ENCODE measurements at regions of chr7 and their contacts with region 1.

Region 1: GRCh38 chr7:54839538-54840213 is 80.7 kb upstream of the SEC61G start:
- DNase-seq: peak; percentile 80 to 82
- ATAC-seq: peak; percentile 90 to 98 (median 92)
- H3K4me3 ChIP-seq: no peak overlapping the region
- H3K27ac ChIP-seq: peak overlapping the region in 1 of 10 donors; percentile 86
- H3K4me1 ChIP-seq: peaks cover 3 to 51% (median 21%) of the 10 kb centered on the region in 9 donors
- H3K27me3 ChIP-seq: no peaks in the 10 kb centered on the region
- CTCF ChIP-seq: peak; percentile 44 to 80 (median 72)

Region 2: GRCh38 chr7:54773472-54774399 is 65.9 kb before region 1 on chr7:
- intact Hi-C with region 1: loop called in 4 of 10 experiments (anchors 2 to 5 kb)
- DNase-seq: peak; percentile 79 to 80
- ATAC-seq: peak; percentile 68 to 96 (median 92)
- H3K4me3 ChIP-seq: peak overlapping the region in 9 of 10 donors; percentile 5 to 52 (median 41)
- H3K27ac ChIP-seq: no peak overlapping the region
- H3K4me1 ChIP-seq: peaks cover 0 to 8% (median 0%) of the 10 kb centered on the region in 9 donors
- H3K27me3 ChIP-seq: peaks cover 0 to 38% (median 21%) of the 10 kb centered on the region in 7 donors
- CTCF ChIP-seq: peak; percentile 73 to 91 (median 83)

Region 3: GRCh38 chr7:54788664-54789063 is 51.0 kb before region 1 on chr7:
- intact Hi-C with region 1: loop called in 8 of 10 experiments (anchors 1 to 10 kb)
- DNase-seq: peak in 1 of 2 donors; percentile 36
- ATAC-seq: peak; percentile 67 to 93 (median 78)
- H3K4me3 ChIP-seq: no peak overlapping the region
- H3K27ac ChIP-seq: no peak overlapping the region
- H3K4me1 ChIP-seq: peaks cover 0 to 9% (median 6%) of the 10 kb centered on the region in 9 donors
- H3K27me3 ChIP-seq: peaks cover 0 to 7% (median 0%) of the 10 kb centered on the region in 7 donors
- CTCF ChIP-seq: peak; percentile 31 to 83 (median 67)

Region 4: GRCh38 chr7:54796150-54796549 is 43.5 kb before region 1 on chr7:
- intact Hi-C with region 1: loop called in 3 of 10 experiments (anchors 5 to 10 kb)
- DNase-seq: no peak
- ATAC-seq: peak in 1 of 8 donors; percentile 57
- H3K4me3 ChIP-seq: no peak overlapping the region
- H3K27ac ChIP-seq: no peak overlapping the region
- H3K4me1 ChIP-seq: peaks cover 0 to 15% (median 0%) of the 10 kb centered on the region in 9 donors
- H3K27me3 ChIP-seq: no peaks in the 10 kb centered on the region
- CTCF ChIP-seq: no peak

Region 5: GRCh38 chr7:55245271-55245723 is 405.6 kb after region 1 on chr7:
- intact Hi-C with region 1: loop called in 3 of 10 experiments (anchors 5 to 10 kb)
- DNase-seq: no peak
- ATAC-seq: peak in 2 of 8 donors; percentile 37 to 51
- H3K4me3 ChIP-seq: no peak overlapping the region
- H3K27ac ChIP-seq: no peak overlapping the region
- H3K4me1 ChIP-seq: no peaks in the 10 kb centered on the region
- H3K27me3 ChIP-seq: peaks cover 0 to 3% (median 0%) of the 10 kb centered on the region in 7 donors
- CTCF ChIP-seq: no peak

Region 6: GRCh38 chr7:55255496-55256435 is 416.1 kb after region 1 on chr7:
- intact Hi-C with region 1: loop called in 4 of 10 experiments (anchors 2 to 10 kb)
- DNase-seq: peak; percentile 71 to 85
- ATAC-seq: peak; percentile 92 to 96 (median 94)
- H3K4me3 ChIP-seq: peak overlapping the region; percentile 46 to 84 (median 60)
- H3K27ac ChIP-seq: peak overlapping the region in 5 of 10 donors; percentile 8 to 65 (median 34)
- H3K4me1 ChIP-seq: peaks cover 0 to 19% (median 11%) of the 10 kb centered on the region in 9 donors
- H3K27me3 ChIP-seq: peaks cover 6 to 55% (median 30%) of the 10 kb centered on the region in 7 donors
- CTCF ChIP-seq: peak; percentile 81 to 97 (median 92)